IMR-90 (cell line): ENCODE measurements at regions of chr12 and their contacts with region 1.

Region 1: DNA sequence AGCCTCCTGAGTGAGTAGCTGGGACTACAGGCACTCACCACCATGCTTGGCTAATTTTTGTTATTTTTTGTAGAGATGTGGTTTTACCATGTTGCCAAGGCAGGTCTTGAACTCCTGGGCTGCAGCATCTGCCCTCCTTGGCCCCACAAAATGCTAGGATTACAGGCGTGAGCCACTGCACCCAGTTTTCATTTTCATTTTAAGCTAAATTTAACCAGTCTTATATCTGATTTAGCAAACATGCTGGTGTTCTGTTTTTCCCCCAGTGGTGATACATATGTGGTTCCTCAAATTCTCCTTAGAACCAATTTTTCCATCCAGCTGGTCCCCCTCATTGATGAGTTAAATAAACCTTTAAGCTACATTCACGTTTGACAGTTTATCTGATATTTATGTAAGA is 43.8 kb upstream of the BICD1 start:
- DNase-seq: no peak
- ATAC-seq: no peak
- H3K4me3 ChIP-seq: no peak overlapping the region
- H3K27ac ChIP-seq: no peak overlapping the region
- H3K4me1 ChIP-seq: no peaks in the 10 kb centered on the region
- H3K27me3 ChIP-seq: no peaks in the 10 kb centered on the region
- CTCF ChIP-seq: no peak
- POLR2A ChIP-seq: no peak
- RAD21 ChIP-seq: no peak

Region 2: DNA sequence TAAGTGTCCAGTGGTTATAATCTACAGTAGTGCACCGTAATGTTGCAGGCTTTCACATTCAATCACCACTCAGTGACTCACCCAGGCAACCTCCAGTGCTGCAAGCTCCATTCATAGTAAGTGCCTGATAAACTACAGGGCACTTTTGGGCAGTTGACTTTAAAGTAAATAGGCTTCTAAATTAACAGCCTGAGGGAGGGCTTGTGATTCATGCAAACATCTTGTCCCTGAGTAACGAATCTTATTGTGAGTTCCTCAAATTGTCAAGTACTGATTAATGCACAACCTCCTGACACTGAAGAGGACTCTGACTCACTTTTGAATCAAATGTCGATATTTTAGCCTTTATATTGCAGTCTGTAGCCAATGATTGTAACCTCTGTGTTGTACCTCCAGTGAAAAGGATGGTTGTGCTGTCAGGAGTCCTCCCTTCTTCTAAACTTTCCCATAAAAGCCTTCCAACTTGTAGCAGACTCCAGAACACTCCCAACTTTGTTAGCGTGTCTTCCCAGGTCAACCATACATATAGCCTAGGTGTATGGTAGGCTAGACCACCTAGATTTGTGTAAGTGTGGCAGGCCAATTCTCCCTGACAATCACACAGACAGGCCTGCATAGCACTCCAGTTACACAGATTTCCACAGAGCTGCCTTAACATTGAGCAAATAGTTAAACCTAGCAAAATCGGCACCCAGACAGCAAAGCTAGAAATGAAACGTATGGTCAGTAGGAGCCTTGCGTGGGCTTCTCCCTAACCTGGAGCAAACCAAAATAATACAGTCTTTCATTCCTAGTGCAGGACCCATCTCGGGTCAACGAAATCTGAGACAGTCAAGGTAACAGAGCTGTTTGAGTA is 11.1 kb before region 1 on chr12:
- CTCF ChIA-PET with region 1: interaction called, 10 read pairs
- POLR2A ChIA-PET with region 1: no interaction called
- dilution Hi-C with region 1: no loop called
- in situ Hi-C with region 1: no loop called
- intact Hi-C with region 1: no loop called
- DNase-seq: peak; percentile 96
- ATAC-seq: peak; percentile 95
- H3K4me3 ChIP-seq: no peak overlapping the region
- H3K27ac ChIP-seq: peak overlapping the region; percentile 4; the same call in 1 of the 2 replicates
- H3K4me1 ChIP-seq: peaks cover 7% of the 10 kb centered on the region
- H3K27me3 ChIP-seq: no peaks in the 10 kb centered on the region
- CTCF ChIP-seq: no peak
- POLR2A ChIP-seq: no peak
- RAD21 ChIP-seq: peak; percentile 12; the same call in 1 of the 2 replicates

Region 3: DNA sequence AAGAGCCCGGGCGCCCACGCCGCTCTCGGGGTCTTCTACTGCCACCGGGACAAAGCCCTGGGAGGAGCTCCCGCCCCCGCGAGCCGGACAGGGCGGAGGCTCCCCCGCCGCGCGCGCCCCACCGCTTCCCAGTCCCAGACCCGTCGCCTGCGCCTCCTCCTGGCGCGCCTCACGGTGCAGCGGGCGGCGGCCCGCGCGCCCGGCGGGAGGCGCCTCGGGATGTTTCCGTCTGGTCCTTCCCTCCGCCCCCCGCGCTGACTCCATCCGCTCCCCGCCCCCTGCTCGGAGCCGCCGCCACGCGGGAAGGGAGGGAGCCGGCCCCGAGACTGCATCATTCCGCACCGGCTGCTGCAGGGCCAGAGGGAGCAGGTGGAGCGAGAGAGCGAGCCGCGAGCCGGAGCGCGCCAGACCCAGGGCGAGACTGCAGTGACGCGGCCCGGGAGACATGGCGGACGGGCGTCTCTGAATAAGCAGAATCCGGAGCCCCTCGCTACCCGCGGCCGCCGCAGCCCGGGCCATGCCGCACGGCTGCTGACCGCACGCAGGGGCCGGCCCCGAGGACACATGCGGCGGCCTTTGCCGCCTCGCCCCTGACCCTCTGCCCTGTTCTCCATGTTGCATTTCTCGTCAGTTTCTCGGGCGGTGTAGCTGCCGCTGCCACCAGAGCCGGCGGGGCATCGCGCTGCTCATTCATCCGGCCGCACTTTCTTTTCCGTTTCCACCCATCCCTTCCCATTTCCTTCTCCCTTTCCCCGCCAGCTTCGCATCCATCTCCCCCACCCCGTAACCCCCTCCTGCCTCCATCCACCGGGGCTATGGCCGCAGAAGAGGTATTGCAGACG is 43.9 kb after region 1 on chr12 and contains the start of gene BICD1:
- CTCF ChIA-PET with region 1: interaction called, 3 read pairs
- POLR2A ChIA-PET with region 1: interaction called, 3 read pairs
- dilution Hi-C with region 1: no loop called
- in situ Hi-C with region 1: no loop called
- intact Hi-C with region 1: loop called (anchors 2 kb)
- DNase-seq: peak; percentile 87
- ATAC-seq: peak; percentile 91
- H3K4me3 ChIP-seq: peak within 1 kb of the TSS; percentile 85
- H3K27ac ChIP-seq: peak within 1 kb of the TSS; percentile 91
- H3K4me1 ChIP-seq: peaks cover 4% of the 10 kb centered on the region
- H3K27me3 ChIP-seq: no peaks in the 10 kb centered on the region
- CTCF ChIP-seq: peak; percentile 58
- POLR2A ChIP-seq: peak; percentile 95
- RAD21 ChIP-seq: peak; percentile 27
- total RNA-seq, gene BICD1: 17.2 and 25.0 TPM in 2 replicates

Region 4: DNA sequence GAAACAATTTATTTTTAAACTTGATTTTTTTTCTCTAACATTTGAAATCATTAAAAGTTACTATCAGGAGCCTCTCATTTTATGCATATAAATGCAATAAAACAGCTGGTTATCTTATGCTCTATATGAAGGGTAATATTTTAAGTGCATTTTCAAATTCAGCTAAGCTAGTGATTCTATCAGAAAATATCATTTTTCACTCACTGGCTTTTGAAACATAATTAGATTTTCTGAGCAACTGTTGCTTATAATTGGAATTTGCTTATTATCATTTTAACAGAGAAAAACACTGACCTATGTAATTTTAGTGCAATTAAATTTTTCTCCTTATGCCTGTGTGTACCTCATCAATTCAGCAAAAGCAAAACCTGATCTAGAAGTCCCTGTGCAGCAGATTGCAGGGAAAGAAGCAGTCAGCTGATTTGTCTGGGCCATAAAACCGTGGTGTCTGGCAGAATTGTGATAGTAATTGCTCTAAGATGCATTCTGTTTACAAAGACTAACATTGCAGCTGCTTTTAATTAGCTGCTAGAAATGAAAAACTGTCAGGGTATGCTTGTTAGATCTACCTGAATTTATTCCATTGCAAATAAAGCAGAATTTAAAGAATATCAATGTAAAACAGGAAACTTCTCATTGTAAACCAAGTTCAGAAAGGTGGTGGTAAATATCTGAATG is 118.8 kb after region 1 on chr12:
- CTCF ChIA-PET with region 1: no interaction called
- POLR2A ChIA-PET with region 1: no interaction called
- dilution Hi-C with region 1: no loop called
- in situ Hi-C with region 1: no loop called
- intact Hi-C with region 1: loop called (anchors 5 kb)
- DNase-seq: no peak
- ATAC-seq: no peak
- H3K4me3 ChIP-seq: no peak overlapping the region
- H3K27ac ChIP-seq: no peak overlapping the region
- H3K4me1 ChIP-seq: peaks cover 6% of the 10 kb centered on the region
- H3K27me3 ChIP-seq: no peaks in the 10 kb centered on the region
- CTCF ChIP-seq: no peak
- POLR2A ChIP-seq: no peak
- RAD21 ChIP-seq: no peak

Region 5: GRCh38 chr12:32312049-32312670 is 249.3 kb after region 1 on chr12:
- CTCF ChIA-PET with region 1: interaction called, 5 read pairs
- POLR2A ChIA-PET with region 1: interaction called, 3 read pairs
- dilution Hi-C with region 1: no loop called
- in situ Hi-C with region 1: no loop called
- intact Hi-C with region 1: loop called (anchors 1 kb)
- DNase-seq: peak; percentile 72
- ATAC-seq: peak; percentile 76
- H3K4me3 ChIP-seq: no peak overlapping the region
- H3K27ac ChIP-seq: no peak overlapping the region
- H3K4me1 ChIP-seq: peaks cover 2% of the 10 kb centered on the region; the same call in 1 of the 2 replicates
- H3K27me3 ChIP-seq: no peaks in the 10 kb centered on the region
- CTCF ChIP-seq: peak; percentile 69
- POLR2A ChIP-seq: no peak
- RAD21 ChIP-seq: peak; percentile 59

Region 6: GRCh38 chr12:32483499-32483898 is 420.6 kb after region 1 on chr12:
- CTCF ChIA-PET with region 1: no interaction called
- POLR2A ChIA-PET with region 1: no interaction called
- dilution Hi-C with region 1: no loop called
- in situ Hi-C with region 1: no loop called
- intact Hi-C with region 1: no loop called
- DNase-seq: no peak
- ATAC-seq: no peak
- H3K4me3 ChIP-seq: no peak overlapping the region
- H3K27ac ChIP-seq: no peak overlapping the region
- H3K4me1 ChIP-seq: no peaks in the 10 kb centered on the region
- H3K27me3 ChIP-seq: no peaks in the 10 kb centered on the region; the same call in 1 of the 2 replicates
- CTCF ChIP-seq: no peak
- POLR2A ChIP-seq: no peak
- RAD21 ChIP-seq: no peak